ENCODE measurements at regions of chr9 and their contacts with region 1.

Region 1: GRCh38 chr9:126198854-126199253 is 127.8 kb upstream of the MVB12B start:
- DNase-seq: no peak
- H3K4me3 ChIP-seq: no peak overlapping the region
- H3K27ac ChIP-seq: no peak overlapping the region
- H3K4me1 ChIP-seq: no peaks in the 10 kb centered on the region
- H3K27me3 ChIP-seq: peaks cover 2% of the 10 kb centered on the region
- CTCF ChIP-seq: no peak

Region 2: DNA sequence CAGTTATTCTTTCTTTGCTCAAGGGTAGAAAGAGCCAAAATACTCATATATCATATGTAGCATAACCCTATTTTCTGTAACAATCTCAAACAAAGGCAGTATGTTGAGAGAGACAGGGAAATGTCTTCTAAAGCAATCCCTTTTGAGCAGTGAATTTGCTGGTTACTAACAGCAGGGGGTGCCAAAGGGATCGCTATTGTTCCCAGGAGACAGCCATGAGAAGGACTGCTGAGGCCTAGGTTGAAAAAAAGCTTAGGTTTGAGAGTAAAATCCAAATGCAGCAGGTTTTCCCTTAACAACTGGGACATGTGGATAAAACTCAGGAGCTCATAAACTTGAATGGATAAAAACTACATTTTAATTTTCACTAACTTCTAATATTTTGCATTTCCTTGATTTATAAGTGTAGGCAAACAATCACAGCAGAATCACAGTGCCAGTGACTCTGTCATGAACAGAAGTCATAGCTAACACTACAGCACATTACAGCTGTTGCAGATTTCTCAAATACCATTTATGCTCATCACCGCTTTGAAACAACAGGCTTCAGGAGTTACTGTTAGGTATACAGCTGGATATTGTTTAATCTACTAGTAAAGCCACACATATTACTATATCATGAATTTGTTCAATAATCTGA is 640.3 kb before region 1 on chr9:
- CTCF ChIA-PET with region 1: no interaction called
- dilution Hi-C with region 1: no loop called
- in situ Hi-C with region 1: no loop called
- intact Hi-C with region 1: no loop called
- DNase-seq: peak; percentile 54
- H3K4me3 ChIP-seq: no peak overlapping the region
- H3K27ac ChIP-seq: no peak overlapping the region
- H3K4me1 ChIP-seq: no peaks in the 10 kb centered on the region
- H3K27me3 ChIP-seq: no peaks in the 10 kb centered on the region
- CTCF ChIP-seq: peak; percentile 81 to 82

Region 3: DNA sequence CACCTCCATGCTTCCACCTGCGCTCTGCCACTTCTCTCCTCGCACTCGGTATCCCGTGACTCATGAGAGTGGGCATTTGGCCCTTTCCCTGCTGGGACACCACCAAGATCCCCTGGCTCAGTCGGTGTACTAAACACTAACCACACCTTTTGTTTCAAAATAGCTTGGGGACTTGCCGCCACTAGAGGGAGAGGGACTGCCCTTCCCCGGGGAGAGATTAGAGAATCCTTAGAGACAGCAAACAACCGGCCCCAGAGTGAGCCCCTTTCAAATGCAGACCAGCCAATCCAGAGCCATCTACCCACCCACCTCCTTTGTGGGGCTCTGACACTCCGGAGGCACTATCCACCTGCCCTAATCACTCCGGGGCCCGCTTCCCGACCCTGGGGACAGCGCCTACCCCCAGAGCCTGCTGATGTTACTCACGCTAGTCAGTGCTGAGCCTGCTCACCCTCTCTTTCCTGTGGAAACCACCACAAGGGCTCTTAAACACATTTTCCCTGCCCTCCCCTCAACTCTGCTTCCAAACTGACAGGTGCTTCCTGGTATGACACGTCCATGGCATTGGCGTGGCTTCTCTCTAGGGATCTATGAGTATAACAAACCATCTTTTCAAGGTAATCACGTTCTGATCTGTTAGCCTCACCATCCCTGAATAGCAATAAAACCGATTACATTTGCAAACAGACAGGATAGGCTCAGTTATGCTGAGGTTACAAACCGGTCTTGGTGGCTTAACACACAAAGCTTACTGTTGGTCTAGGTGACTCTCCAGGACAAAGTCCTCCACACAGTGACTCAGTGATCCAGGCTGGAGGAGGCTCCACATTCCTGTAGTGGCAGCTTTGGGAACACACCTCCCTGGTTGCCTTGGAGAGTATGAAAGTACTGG is 52.4 kb before region 1 on chr9:
- CTCF ChIA-PET with region 1: no interaction called
- dilution Hi-C with region 1: no loop called
- in situ Hi-C with region 1: no loop called
- intact Hi-C with region 1: no loop called
- DNase-seq: no peak
- H3K4me3 ChIP-seq: no peak overlapping the region
- H3K27ac ChIP-seq: no peak overlapping the region
- H3K4me1 ChIP-seq: no peaks in the 10 kb centered on the region
- H3K27me3 ChIP-seq: no peaks in the 10 kb centered on the region
- CTCF ChIP-seq: peak; percentile 31 to 64

Region 4: DNA sequence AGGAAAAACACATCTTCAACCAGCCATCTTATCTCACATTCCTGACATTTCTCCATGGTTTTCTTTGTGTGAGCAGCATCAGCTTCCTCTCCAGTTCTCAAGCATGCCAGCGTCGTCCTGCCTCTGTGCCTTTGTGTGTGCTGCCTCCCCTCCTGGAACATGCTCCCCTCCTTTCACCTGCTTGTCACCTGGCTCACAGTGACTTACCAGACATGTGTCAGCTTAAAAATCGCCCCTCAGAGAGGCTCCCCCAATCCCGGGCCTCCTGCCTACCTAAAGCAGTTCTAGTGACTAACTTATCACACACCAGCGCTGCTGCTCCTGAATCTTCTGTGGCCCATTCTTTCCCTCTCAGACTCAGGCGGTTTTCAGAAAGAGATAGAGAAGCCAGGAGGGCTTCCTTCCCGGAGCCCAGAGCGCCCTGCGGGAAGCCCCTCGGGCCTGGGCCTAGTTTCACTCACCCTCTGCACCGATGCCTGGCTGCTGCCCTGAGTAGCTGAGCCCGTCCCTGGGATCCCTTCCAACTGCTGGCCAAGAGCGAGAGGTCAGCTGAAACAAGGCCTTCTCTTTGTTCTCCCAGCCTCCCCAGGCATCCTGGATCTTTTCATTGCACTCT is 76.6 kb after region 1 on chr9:
- CTCF ChIA-PET with region 1: no interaction called
- dilution Hi-C with region 1: loop called (anchors 5 kb)
- in situ Hi-C with region 1: no loop called
- intact Hi-C with region 1: no loop called
- DNase-seq: no peak
- H3K4me3 ChIP-seq: no peak overlapping the region
- H3K27ac ChIP-seq: no peak overlapping the region
- H3K4me1 ChIP-seq: no peaks in the 10 kb centered on the region
- H3K27me3 ChIP-seq: peaks cover under 1% of the 10 kb centered on the region
- CTCF ChIP-seq: no peak

Region 5: DNA sequence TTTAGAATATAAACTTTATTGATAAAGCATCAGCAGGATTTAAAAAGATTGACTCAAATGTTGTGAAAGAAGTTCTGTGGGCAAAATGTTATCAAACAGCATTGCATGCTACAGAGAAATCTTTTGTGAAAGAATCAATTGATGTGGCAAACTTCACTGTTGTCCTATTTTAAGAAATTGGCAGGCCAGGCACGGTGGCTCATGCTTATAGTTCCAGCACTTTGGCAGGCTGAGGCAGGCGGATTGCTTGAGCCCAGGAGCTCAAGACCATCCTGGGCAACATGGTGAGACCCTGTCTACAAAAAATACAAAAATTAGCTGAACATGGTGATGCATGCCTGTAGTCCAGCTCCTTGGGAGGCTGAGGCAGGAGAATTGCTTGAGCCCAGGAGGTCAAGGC is 623.4 kb after region 1 on chr9:
- CTCF ChIA-PET with region 1: no interaction called
- dilution Hi-C with region 1: no loop called
- in situ Hi-C with region 1: no loop called
- intact Hi-C with region 1: no loop called
- DNase-seq: no peak
- H3K4me3 ChIP-seq: no peak overlapping the region
- H3K27ac ChIP-seq: no peak overlapping the region
- H3K4me1 ChIP-seq: no peaks in the 10 kb centered on the region
- H3K27me3 ChIP-seq: no peaks in the 10 kb centered on the region
- CTCF ChIP-seq: no peak

Measured in mammary epithelial cell (primary cell).